AG04450 (cell line): ENCODE measurements at regions of chr5 and their contacts with region 1.

Region 1: GRCh38 chr5:7815892-7816534 is 34.9 kb downstream of the CFAP90 start:
- DNase-seq: peak; percentile 4
- H3K4me3 ChIP-seq: no peak overlapping the region
- H3K27ac ChIP-seq: no peak overlapping the region
- H3K27me3 ChIP-seq: no peaks in the 10 kb centered on the region
- CTCF ChIP-seq: peak; percentile 84

Region 2: GRCh38 chr5:6723122-6723815 is 1092.7 kb before region 1 on chr5:
- CTCF ChIA-PET with region 1: interaction called, 11 read pairs
- POLR2A ChIA-PET with region 1: no interaction called
- DNase-seq: no peak
- H3K4me3 ChIP-seq: no peak overlapping the region
- H3K27ac ChIP-seq: no peak overlapping the region
- H3K27me3 ChIP-seq: no peaks in the 10 kb centered on the region
- CTCF ChIP-seq: no peak

Region 3: DNA sequence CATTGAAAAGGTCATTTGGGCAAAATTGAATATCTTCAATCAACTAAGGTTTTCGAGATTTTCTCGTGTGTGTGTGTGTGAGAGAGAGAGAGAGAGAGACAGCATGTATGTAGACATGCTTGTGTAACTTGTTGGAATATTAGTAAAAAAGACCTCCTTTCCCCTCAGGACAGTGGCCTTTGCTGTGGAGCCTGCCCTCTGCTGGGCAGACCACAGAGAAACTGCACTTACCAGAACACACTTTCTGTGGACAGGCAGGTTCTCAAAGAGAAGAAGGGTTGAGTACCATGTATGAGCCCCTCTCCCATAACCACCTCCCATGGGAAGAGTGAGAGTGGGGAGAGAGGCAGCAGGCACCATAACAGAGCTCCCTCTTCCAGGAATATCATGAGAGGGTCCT is 10.6 kb before region 1 on chr5:
- CTCF ChIA-PET with region 1: interaction called, 23 read pairs
- POLR2A ChIA-PET with region 1: no interaction called
- DNase-seq: no peak
- H3K4me3 ChIP-seq: no peak overlapping the region
- H3K27ac ChIP-seq: no peak overlapping the region
- H3K27me3 ChIP-seq: no peaks in the 10 kb centered on the region
- CTCF ChIP-seq: no peak

Region 4: GRCh38 chr5:7874637-7875036 is 58.6 kb after region 1 on chr5:
- CTCF ChIA-PET with region 1: no interaction called
- POLR2A ChIA-PET with region 1: no interaction called
- DNase-seq: no peak
- H3K4me3 ChIP-seq: no peak overlapping the region
- H3K27ac ChIP-seq: no peak overlapping the region
- H3K27me3 ChIP-seq: no peaks in the 10 kb centered on the region
- CTCF ChIP-seq: no peak